ENCODE measurements at regions of chr20 and their contacts with region 1.

Region 1: DNA sequence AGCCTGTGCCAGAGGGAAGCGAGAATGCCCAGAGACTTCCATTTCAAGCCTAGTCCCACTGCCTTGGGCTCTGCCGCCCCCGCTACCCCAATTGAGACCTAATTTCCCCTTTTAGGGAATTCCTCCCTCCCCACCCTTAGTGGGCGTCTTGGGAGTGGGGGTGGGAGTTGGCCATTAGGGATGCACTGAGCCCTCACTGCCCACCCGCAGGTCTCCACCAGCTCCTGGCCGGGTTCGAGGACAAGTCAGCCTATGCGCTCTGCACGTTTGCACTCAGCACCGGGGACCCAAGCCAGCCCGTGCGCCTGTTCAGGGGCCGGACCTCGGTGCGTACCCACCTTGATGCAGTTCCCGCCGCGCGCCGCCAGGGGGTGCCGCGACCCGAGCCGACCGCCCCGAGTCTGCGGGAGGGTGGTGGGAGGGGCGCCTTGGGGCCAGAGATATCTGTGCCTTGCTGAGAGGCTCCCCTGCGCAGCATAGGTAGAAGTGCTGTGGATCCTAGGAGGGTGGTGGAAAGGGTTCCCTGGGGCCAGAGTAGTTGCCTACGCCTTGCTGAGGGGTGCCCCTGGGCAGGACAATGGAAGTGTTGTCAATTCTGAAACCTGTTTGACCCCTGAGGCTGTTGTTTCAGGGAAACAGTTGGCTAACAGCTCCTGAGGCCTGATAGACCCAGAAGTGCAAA is 9.2 kb downstream of the ITPA start:
- DNase-seq: peak; percentile 87
- CTCF ChIP-seq: peak; percentile 91

Region 2: DNA sequence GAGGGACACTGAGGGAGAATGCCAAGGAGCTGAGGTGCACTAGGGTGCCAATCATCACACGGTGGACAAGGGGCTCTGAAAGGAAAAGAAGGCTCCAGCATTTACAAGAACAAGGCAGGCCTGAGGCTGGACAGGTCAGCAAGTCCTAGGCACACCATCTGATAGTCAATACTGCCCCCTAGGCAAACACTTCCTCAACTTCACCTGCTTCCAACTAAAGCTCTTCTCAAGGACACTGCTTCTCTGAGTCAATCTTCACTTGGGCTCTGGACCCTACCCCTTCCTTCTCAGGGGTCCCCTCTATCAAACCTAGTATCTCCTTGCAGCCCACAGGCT is 58.2 kb after region 1 on chr20:
- CTCF ChIA-PET with region 1: interaction called, 29 read pairs
- POLR2A ChIA-PET with region 1: no interaction called
- DNase-seq: peak; percentile 42
- CTCF ChIP-seq: peak; percentile 34

Region 3: GRCh38 chr20:3312940-3313682 is 94.7 kb after region 1 on chr20:
- CTCF ChIA-PET with region 1: interaction called, 33 read pairs
- POLR2A ChIA-PET with region 1: no interaction called
- DNase-seq: no peak
- CTCF ChIP-seq: no peak